Lower leg skin (tissue), 4 donors: ENCODE measurements at regions of chr19 and their contacts with region 1.

Region 1: GRCh38 chr19:13207846-13208671 is 57.8 kb downstream of the IER2 start:
- DNase-seq: peak in 1 of 2 donors; percentile 36
- H3K4me3 ChIP-seq: no peak overlapping the region
- CTCF ChIP-seq: no peak
- POLR2A ChIP-seq: no peak

Region 2: GRCh38 chr19:12983542-12984142 is 224.4 kb before region 1 on chr19:
- intact Hi-C with region 1: no loop called
- DNase-seq: no peak
- H3K4me3 ChIP-seq: no peak overlapping the region
- CTCF ChIP-seq: peak in 1 of 3 donors; percentile 70
- POLR2A ChIP-seq: no peak

Region 3: GRCh38 chr19:13044231-13044836 is 163.7 kb before region 1 on chr19:
- intact Hi-C with region 1: no loop called
- DNase-seq: no peak
- H3K4me3 ChIP-seq: no peak overlapping the region
- CTCF ChIP-seq: no peak
- POLR2A ChIP-seq: no peak

Region 4: DNA sequence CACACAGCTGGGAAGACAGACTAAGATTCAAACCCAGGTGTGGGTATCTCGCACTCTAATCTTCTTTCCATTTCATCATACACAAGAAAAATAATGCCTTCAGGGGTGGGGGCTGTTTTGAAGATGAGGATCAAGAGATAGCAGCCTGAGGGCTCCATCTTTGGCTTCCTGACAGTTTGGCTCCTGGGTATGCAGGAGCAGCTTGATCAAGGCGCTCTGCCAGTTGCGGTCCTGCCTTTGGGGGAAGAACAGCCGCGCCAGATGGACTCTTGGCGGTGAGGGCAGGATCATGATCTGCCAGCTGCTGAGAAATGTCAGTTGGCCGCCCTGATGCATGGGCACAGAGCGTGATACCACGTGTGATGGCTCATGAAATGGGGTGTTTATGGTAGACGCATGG is 61.3 kb after region 1 on chr19:
- intact Hi-C with region 1: loop called (anchors 5 kb)
- DNase-seq: no peak
- H3K4me3 ChIP-seq: no peak overlapping the region
- CTCF ChIP-seq: no peak
- POLR2A ChIP-seq: no peak

Region 5: GRCh38 chr19:13381827-13382632 is 174.0 kb after region 1 on chr19:
- intact Hi-C with region 1: no loop called
- DNase-seq: no peak
- H3K4me3 ChIP-seq: no peak overlapping the region
- CTCF ChIP-seq: no peak
- POLR2A ChIP-seq: no peak